ENCODE measurements at regions of chr19 and their contacts with region 1.

Region 1: GRCh38 chr19:6551607-6552450 is 21.0 kb downstream of the TNFSF9 start:
- DNase-seq: peak; percentile 74 to 86 (median 85)
- ATAC-seq: peak; percentile 100
- H3K4me3 ChIP-seq: no peak overlapping the region; the same call in 1 of the 2 replicates
- H3K27ac ChIP-seq: no peak overlapping the region
- H3K4me1 ChIP-seq: peaks cover 0 to 17% of the 10 kb centered on the region in 2 experiments; a peak in 3 of 5 replicates
- H3K27me3 ChIP-seq: no peaks in the 10 kb centered on the region
- CTCF ChIP-seq: peak; percentile 53 to 76 (median 60); a peak in 5 of 6 replicates
- EP300 ChIP-seq: no peak
- POLR2A ChIP-seq: no peak
- RAD21 ChIP-seq: peak; percentile 9 to 49; a peak in 2 of 4 replicates

Region 2: DNA sequence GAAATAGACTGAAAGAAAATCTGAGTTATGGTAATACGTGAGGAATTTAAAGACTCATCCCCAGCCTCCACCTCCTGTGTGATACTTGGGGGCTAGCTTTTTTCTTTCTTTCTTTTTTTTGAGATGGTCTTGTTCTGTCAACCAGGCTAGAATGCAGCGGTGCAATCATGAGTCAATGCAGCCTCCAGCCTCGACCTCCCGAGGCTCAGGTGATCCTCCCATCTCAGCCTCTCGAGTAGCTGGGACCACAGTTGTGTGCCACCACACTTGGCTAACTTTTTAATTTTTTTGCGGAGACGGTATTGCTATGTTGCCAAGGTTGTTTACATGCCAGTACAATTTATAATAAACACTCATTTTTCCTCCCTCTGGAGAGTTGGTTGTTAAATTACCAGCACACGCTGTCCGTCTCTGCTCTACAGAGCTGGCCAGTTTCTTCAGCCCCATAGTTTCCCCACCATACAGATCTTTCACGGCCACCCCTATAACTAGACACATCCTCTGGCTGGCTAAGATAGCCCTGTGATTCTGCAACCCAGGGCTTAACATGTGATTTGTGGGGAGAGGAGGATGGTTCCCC is 16.2 kb before region 1 on chr19:
- CTCF ChIA-PET with region 1: no interaction called
- POLR2A ChIA-PET with region 1: interaction called, 14 read pairs
- in situ Hi-C with region 1: no loop called
- intact Hi-C with region 1: no loop called
- DNase-seq: no peak
- ATAC-seq: no peak
- H3K4me3 ChIP-seq: no peak overlapping the region
- H3K27ac ChIP-seq: no peak overlapping the region
- H3K4me1 ChIP-seq: peaks cover 12 to 31% of the 10 kb centered on the region in 2 experiments; a peak in 4 of 5 replicates
- H3K27me3 ChIP-seq: no peaks in the 10 kb centered on the region
- CTCF ChIP-seq: no peak
- EP300 ChIP-seq: no peak
- POLR2A ChIP-seq: no peak
- RAD21 ChIP-seq: no peak

Region 3: DNA sequence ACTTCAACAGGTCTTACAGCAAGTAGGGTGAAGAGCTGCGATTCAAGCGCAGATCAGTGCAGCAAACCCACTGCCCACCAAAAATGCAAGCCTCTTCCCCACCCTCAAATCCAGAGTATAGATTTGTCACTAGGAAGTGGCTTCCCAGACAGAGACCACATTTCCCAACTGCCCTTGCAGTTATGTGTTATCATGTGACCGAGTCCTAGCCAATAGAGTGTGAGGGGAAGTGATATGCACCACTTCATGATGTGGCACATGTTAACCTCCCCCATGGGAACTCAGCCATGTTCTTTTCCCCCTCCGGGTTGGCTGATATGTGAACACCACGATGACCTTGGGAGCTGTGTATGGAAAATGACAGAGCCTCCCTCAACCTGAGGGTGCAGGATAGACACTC is 418.6 kb after region 1 on chr19:
- CTCF ChIA-PET with region 1: no interaction called
- POLR2A ChIA-PET with region 1: no interaction called
- in situ Hi-C with region 1: no loop called
- intact Hi-C with region 1: no loop called
- DNase-seq: peak; percentile 33 to 53 (median 40)
- ATAC-seq: peak; percentile 78
- H3K4me3 ChIP-seq: no peak overlapping the region
- H3K27ac ChIP-seq: no peak overlapping the region
- H3K4me1 ChIP-seq: no peaks in the 10 kb centered on the region
- H3K27me3 ChIP-seq: peaks cover 5 to 18% of the 10 kb centered on the region in 2 experiments; a peak in 4 of 5 replicates
- CTCF ChIP-seq: no peak
- EP300 ChIP-seq: no peak
- POLR2A ChIP-seq: no peak
- RAD21 ChIP-seq: no peak